PC-3 (cell line): ENCODE measurements at regions of chr9 and their contacts with region 1.

Region 1: DNA sequence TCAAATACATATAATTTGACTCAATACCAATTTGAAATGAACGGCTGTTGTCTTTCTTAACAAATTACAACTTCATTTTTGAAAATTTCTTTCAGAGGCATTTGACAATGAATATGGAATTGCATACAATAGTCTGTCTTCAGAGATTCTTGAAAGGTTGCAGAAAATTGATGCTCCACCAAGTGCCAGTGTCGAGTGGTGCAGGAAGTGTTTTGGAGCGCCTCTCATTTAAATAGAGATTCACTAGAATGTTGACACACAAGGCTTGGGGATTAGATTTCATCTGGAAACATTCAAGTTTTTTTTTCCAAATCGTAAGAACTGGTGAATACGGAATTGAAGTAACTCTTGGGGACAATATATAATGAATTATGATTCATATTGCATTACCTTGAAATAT is 8.1 kb downstream of the RPS6 start:
- DNase-seq: peak; percentile 23
- ATAC-seq: peak; percentile 68
- H3K4me3 ChIP-seq: no peak overlapping the region
- H3K27ac ChIP-seq: no peak overlapping the region
- H3K4me1 ChIP-seq: no peaks in the 10 kb centered on the region
- H3K27me3 ChIP-seq: no peaks in the 10 kb centered on the region
- CTCF ChIP-seq: 0 out of 2 replicates have a peak, but pooled peaks have one; percentile 20

Region 2: GRCh38 chr9:19009391-19009965 is 362.5 kb before region 1 on chr9:
- CTCF ChIA-PET with region 1: no interaction called
- POLR2A ChIA-PET with region 1: interaction called, 12 read pairs
- intact Hi-C with region 1: no loop called
- DNase-seq: no peak
- ATAC-seq: no peak
- H3K4me3 ChIP-seq: no peak overlapping the region
- H3K27ac ChIP-seq: no peak overlapping the region
- H3K4me1 ChIP-seq: no peaks in the 10 kb centered on the region
- H3K27me3 ChIP-seq: no peaks in the 10 kb centered on the region
- CTCF ChIP-seq: no peak

Region 3: GRCh38 chr9:19408693-19409400 is 36.9 kb after region 1 on chr9 and contains the start of gene ACER2:
- CTCF ChIA-PET with region 1: no interaction called
- POLR2A ChIA-PET with region 1: no interaction called
- intact Hi-C with region 1: loop called (anchors 5 kb)
- DNase-seq: peak; percentile 93
- ATAC-seq: peak; percentile 85
- H3K4me3 ChIP-seq: peak within 1 kb of the TSS; percentile 92
- H3K27ac ChIP-seq: peak within 1 kb of the TSS; percentile 36
- H3K4me1 ChIP-seq: peaks cover 34% of the 10 kb centered on the region
- H3K27me3 ChIP-seq: no peaks in the 10 kb centered on the region
- CTCF ChIP-seq: no peak
- total RNA-seq, gene ACER2: 2.4 and 4.4 TPM in 2 replicates